PC-3 (cell line): ENCODE measurements at regions of chr2 and their contacts with region 1.

Region 1: DNA sequence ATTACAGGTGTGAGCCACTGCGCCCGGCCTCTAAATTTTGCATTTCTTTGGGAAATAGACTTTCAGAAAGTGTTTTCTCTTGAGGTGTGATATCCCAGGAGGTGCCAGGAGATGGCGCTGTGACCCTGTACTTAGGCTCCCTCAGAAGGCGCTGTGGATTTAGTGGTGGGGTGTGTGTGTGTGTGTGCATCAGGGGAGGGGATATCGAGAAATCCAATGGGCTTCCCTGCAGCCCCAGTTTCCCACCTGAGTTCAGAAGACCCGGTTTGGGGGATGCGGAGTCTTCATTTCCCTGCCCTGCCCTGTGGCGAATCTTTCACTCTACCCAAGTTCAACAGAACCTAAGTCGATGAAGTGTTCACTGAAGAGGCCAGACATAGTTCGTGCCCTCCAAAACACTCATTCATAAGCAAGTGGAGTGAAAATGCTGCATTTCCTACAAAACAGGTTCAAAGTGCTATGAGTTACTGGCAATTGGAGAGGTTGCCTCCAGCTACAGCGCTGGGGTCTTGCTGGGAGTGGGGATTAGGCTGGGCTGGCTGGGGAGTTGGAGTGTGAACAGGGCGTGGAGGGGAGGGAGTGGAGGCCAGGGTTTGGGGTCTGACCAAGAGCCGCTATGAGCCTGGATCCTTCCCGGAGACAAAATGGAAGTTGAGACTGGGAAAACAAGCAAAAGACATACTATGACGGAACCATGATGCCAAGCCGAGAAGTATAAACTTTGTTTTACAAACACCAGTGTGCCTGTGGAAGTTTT is 6.5 kb upstream of the WNT6 start:
- DNase-seq: peak; percentile 76
- ATAC-seq: peak; percentile 50
- H3K4me3 ChIP-seq: no peak overlapping the region
- H3K27ac ChIP-seq: no peak overlapping the region
- H3K4me1 ChIP-seq: peaks cover 10% of the 10 kb centered on the region
- H3K27me3 ChIP-seq: no peaks in the 10 kb centered on the region
- CTCF ChIP-seq: peak; percentile 85

Region 2: GRCh38 chr2:218701806-218702205 is 151.3 kb before region 1 on chr2:
- CTCF ChIA-PET with region 1: no interaction called
- POLR2A ChIA-PET with region 1: no interaction called
- intact Hi-C with region 1: no loop called
- DNase-seq: no peak
- ATAC-seq: no peak
- H3K4me3 ChIP-seq: no peak overlapping the region
- H3K27ac ChIP-seq: no peak overlapping the region
- H3K4me1 ChIP-seq: no peaks in the 10 kb centered on the region
- H3K27me3 ChIP-seq: no peaks in the 10 kb centered on the region
- CTCF ChIP-seq: no peak

Region 3: DNA sequence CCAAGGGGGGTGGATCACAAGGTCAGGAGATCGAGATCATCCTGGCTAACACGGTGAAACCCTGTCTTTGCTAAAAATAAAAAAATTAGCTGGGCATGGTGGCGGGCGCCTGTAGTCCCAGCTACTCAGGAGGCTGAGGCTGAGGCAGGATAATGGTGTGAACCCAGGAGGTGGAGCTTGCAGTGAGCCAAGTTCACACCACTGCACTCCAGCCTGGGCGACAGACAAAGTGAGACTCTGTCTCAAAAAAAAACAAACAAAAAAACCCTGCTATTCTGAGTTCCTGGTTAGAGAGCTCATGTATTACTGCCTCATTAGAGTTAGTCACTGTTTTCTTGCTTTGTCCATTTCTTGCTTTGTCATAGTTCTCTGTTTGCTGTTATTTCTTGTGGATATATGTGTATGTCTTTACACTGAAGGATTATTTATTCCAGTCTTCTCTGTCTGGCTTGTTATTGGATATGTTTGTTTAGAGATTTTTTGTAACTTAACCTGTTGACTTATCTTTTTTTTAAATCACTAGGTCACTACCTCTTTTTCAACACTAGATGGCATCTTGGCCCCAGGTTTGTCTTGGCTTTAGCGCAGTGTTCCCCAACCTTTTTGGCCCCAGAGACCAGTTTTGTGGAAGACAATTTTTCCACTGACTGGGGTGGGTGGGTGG is 125.5 kb before region 1 on chr2:
- CTCF ChIA-PET with region 1: interaction called, 22 read pairs
- POLR2A ChIA-PET with region 1: no interaction called
- intact Hi-C with region 1: no loop called
- DNase-seq: peak; percentile 65
- ATAC-seq: peak; percentile 34
- H3K4me3 ChIP-seq: no peak overlapping the region
- H3K27ac ChIP-seq: peak overlapping the region; percentile 6; the same call in 1 of the 2 replicates
- H3K4me1 ChIP-seq: peaks cover 20% of the 10 kb centered on the region
- H3K27me3 ChIP-seq: no peaks in the 10 kb centered on the region
- CTCF ChIP-seq: peak; percentile 67

Region 4: DNA sequence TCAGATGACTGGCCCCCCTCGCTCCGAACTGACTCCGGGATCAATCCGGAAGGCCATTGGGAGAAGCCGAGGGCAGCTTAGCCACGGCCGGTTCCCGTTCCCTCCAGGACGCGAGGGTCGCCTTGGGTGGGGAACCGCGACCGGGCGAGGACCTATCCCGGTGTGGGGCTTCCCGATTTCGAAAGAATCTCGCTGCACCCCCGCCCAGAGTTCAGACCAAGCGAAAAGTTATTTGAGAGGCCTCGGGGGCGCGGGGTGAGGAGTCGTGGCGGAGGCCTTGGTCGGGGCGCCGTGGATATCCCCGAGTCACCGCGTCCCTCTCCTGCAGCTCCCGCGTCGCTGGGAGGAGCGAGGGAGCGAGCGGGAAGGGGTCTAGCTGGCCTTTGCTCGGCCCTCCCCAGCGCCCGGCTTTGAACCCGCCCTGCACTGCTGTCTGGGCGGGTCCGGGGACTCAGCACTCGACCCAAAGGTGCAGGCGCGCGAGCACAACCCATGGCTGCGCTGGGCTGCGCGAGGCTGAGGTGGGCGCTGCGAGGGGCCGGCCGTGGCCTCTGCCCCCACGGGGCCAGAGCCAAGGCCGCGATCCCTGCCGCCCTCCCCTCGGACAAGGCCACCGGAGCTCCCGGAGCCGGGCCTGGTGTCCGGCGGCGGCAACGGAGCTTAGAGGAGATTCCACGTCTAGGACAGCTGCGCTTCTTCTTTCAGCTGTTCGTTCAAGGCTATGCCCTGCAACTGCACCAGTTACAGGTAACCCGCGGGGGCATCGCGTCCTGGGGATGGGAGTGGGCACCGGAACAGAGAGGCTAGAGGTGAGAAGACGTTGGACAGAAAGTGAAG is 71.2 kb before region 1 on chr2 and contains the start of gene CYP27A1:
- CTCF ChIA-PET with region 1: interaction called, 8 read pairs
- POLR2A ChIA-PET with region 1: no interaction called
- intact Hi-C with region 1: loop called (anchors 10 kb)
- DNase-seq: peak; percentile 23
- ATAC-seq: peak; percentile 81
- H3K4me3 ChIP-seq: peak within 1 kb of the TSS; percentile 79
- H3K27ac ChIP-seq: no peak within 1 kb of the TSS
- H3K4me1 ChIP-seq: peaks cover 10% of the 10 kb centered on the region
- H3K27me3 ChIP-seq: no peaks in the 10 kb centered on the region
- CTCF ChIP-seq: no peak
- total RNA-seq, gene CYP27A1: 5.8 and 6.0 TPM in 2 replicates

Region 5: DNA sequence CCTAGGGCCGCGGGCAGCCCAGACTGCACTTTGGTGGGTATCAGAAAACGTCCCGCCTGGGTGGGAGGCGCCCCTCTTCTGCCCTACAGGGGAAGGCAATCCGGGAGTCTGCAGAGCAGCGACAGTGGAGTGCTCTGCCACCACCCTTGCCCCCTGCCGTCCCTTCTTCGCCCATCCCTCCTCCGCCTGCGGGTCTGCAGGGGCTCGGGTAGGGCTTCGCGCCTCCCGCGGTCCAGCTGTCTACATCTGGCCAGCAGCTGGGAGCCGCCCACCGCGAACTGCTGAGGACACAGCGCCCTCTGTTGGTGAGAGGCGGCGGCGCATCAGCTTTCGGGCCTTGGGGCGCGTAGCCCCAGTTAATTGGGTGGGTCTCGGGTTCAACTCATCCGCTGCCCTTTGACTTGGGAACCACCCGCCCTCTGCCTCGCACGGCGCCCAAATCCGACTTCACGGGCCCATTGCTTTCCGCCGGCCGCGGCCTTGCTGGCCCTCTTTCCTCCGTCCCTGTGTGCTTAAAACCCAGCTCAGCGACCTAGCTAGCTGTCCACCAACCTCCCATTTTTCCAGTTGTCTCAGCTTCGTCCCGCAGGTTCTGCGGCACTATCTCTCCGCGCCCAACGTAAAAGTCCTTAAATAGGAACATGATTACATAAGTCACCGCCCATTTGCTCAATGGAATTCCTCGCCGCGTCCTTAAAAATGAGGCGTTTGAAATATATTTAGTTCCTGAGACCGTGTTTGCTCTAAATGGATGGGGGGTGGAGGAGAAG is 45.2 kb after region 1 on chr2:
- CTCF ChIA-PET with region 1: interaction called, 6 read pairs
- POLR2A ChIA-PET with region 1: no interaction called
- intact Hi-C with region 1: loop called (anchors 2 kb)
- DNase-seq: peak; percentile 64
- ATAC-seq: peak; percentile 19
- H3K4me3 ChIP-seq: no peak overlapping the region
- H3K27ac ChIP-seq: no peak overlapping the region
- H3K4me1 ChIP-seq: peaks cover 47% of the 10 kb centered on the region
- H3K27me3 ChIP-seq: no peaks in the 10 kb centered on the region
- CTCF ChIP-seq: peak; percentile 93